Calu3 (cell line): ENCODE measurements at regions of chr13 and their contacts with region 1.

Region 1: DNA sequence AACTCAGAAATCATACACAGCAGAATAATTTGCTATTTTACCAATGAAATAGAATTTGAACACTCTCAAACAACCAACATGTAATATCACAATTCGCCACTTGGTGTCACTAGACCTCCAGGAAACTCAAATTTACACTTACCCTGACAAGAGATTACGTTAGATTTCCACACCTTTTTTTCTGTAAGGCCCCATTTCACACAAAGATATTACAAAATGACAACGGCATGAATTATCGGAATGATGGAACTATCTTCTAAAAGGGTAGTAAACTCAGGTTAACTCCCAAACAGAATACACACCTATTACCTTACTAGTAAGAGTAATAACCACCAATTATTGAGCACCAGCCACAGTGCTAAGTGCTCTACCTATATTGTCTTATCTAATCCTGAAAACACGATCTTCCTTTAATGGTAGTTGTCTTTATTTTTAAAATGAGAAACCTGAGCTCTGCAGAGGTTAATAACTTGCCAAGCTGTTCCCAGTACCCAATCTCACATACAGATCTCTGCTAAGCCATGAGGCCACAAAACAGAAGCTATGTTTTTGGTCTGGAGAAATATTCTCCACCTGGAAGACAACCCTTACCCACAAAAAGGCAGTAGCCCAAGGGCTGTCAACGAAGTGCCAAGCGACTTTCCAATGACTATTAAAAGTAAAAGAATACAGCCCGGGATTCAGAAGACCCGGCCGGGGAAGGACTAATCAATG is 152.4 kb downstream of the DCLK1 start:
- DNase-seq: peak; percentile 40
- H3K4me3 Mint-ChIP-seq: no peak overlapping the region
- H3K27ac Mint-ChIP-seq: no peak overlapping the region
- H3K4me1 Mint-ChIP-seq: no peaks in the 10 kb centered on the region
- H3K27me3 Mint-ChIP-seq: peaks cover 14% of the 10 kb centered on the region
- CTCF ChIP-seq: peak; percentile 59

Region 2: GRCh38 chr13:36275190-36276002 is 296.6 kb after region 1 on chr13:
- CTCF ChIA-PET with region 1: interaction called, 26 read pairs
- intact Hi-C with region 1: loop called (anchors 1 kb)
- DNase-seq: peak; percentile 32
- H3K4me3 Mint-ChIP-seq: no peak overlapping the region
- H3K27ac Mint-ChIP-seq: no peak overlapping the region
- H3K4me1 Mint-ChIP-seq: no peaks in the 10 kb centered on the region
- H3K27me3 Mint-ChIP-seq: peaks cover 26% of the 10 kb centered on the region
- CTCF ChIP-seq: no peak